ENCODE measurements at regions of chr12 and their contacts with region 1.

Region 1: GRCh38 chr12:13196130-13196921 is at the start of gene EMP1:
- DNase-seq: peak in 1 of 2 donors; percentile 98
- H3K4me3 ChIP-seq: peak within 1 kb of the TSS; percentile 60 to 65
- H3K27ac ChIP-seq: peak within 1 kb of the TSS; percentile 89
- H3K4me1 ChIP-seq: peaks cover 63% of the 10 kb centered on the region
- H3K27me3 ChIP-seq: no peaks in the 10 kb centered on the region
- CTCF ChIP-seq: no peak
- POLR2A ChIP-seq: peak in 1 of 2 donors; percentile 82
- total RNA-seq, gene EMP1: 675 TPM

Region 2: DNA sequence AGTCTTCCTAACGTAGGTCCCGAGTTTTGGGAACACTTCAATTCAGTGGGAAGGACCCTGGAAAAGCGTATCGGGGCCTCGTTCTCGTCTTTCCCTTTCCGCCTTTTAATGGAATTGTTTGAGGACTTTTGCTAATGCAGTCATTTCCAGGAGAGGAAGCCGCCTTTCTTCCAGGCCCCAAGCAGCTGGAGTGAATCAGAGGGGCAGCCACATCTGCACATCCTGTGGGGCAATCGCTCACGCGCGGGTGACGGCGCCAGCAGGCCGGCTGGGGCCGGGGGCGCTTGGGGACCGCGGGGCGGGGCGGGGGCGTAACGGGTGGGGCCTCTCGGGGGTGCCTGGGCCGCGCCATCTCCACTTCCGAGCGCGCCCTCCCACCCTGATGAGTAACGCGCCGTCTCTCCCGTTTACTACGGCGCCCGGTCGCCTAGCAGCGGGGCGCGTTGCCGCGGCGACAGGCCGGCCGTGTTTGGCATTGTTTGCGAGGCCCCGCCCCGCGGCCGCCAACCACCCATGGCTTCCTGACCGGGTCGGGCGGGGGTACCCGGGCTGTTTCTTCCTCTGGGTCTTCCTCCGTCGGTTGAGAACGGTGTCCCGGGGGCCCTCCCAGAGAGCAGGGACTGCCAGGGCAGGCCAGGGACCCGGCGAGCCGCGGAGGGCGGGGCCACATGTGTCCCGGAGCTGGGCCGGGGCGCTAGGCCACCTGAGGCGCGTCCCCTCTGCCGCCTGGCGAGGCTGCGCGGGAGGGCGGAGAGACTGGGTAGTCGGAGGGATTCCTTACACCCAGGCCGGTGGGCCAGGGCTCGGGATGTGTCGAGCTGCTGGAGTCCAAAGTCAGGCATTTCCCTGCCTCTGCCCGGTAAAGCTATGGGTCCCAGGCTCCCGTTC is 95.2 kb before region 1 on chr12:
- intact Hi-C with region 1: loop called (anchors 2 kb)
- DNase-seq: peak in 1 of 2 donors; percentile 96
- H3K4me3 ChIP-seq: peak overlapping the region; percentile 55 to 60
- H3K27ac ChIP-seq: peak overlapping the region; percentile 96
- H3K4me1 ChIP-seq: peaks cover 70% of the 10 kb centered on the region
- H3K27me3 ChIP-seq: no peaks in the 10 kb centered on the region
- CTCF ChIP-seq: no peak
- POLR2A ChIP-seq: no peak

Region 3: GRCh38 chr12:13148064-13148847 is 48.1 kb before region 1 on chr12:
- intact Hi-C with region 1: loop called (anchors 5 kb)
- DNase-seq: no peak
- H3K4me3 ChIP-seq: no peak overlapping the region
- H3K27ac ChIP-seq: no peak overlapping the region
- H3K4me1 ChIP-seq: peaks cover 28% of the 10 kb centered on the region
- H3K27me3 ChIP-seq: no peaks in the 10 kb centered on the region
- CTCF ChIP-seq: no peak
- POLR2A ChIP-seq: no peak